PC-3 (cell line): ENCODE measurements at regions of chr3 and their contacts with region 1.

Region 1: DNA sequence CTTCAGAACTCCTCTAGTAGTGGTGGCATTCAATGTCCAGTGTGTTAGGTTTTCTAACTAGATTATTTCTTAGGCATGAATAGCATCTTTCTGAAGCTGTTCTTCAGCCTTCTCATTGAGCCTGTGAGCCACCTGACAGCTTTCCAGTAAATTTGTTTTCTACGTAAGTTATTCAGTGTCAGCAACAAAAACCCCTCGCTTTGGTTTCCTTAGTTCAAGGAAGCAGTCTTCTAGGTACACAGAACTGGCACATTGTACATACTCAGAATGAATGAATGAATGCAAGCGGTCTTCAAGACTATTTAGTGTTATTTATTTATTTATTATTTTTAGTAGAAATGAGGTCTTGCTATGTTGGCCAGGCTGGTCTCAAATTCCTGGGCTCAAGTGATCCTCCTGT is 44.9 kb downstream of the DRD3 start:
- DNase-seq: no peak
- ATAC-seq: no peak
- H3K4me3 ChIP-seq: no peak overlapping the region
- H3K27ac ChIP-seq: no peak overlapping the region
- H3K4me1 ChIP-seq: no peaks in the 10 kb centered on the region
- H3K27me3 ChIP-seq: 0 out of 2 replicates have a peak, but pooled peaks cover 5% of the 10 kb centered on the region
- CTCF ChIP-seq: no peak

Region 2: DNA sequence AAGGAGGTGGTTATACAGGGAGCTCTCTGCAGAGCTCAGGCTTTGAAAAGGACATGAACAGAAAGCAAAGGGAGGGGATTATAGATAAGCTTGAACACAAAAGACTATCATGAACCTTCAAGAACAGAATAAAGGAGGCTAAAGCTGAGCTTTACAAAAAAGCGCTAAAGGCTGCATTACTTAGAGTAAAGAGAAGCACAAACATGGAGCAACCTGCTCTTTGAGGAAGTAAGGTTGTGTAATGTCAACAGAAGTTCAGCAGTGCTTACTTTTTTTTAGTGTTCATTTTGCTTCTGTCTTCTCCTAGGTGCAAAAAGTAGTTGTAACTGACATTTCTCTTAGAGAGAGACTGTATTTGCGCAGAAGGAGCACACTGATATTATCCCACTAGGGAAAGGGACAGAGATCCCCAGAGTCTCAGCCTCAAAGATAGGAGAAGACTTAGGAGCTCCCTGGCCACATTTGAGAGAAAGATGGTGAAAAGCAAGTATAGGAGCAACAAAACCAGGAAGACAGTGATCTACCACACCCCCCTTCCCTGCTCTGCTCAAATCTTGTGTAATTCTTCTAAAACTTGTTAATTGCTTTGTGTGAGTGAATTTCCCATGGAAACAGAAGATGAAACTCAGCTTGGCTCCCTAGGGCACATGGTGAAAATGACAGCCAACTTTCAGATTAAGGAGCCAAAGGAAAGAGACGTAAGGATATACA is 22.7 kb before region 1 on chr3:
- CTCF ChIA-PET with region 1: interaction called, 10 read pairs
- POLR2A ChIA-PET with region 1: no interaction called
- intact Hi-C with region 1: no loop called
- DNase-seq: no peak
- ATAC-seq: no peak
- H3K4me3 ChIP-seq: no peak overlapping the region
- H3K27ac ChIP-seq: no peak overlapping the region
- H3K4me1 ChIP-seq: no peaks in the 10 kb centered on the region
- H3K27me3 ChIP-seq: peaks cover 14% of the 10 kb centered on the region; the same call in 1 of the 2 replicates
- CTCF ChIP-seq: no peak

Region 3: GRCh38 chr3:114194750-114195149 is 60.8 kb after region 1 on chr3:
- CTCF ChIA-PET with region 1: no interaction called
- POLR2A ChIA-PET with region 1: no interaction called
- intact Hi-C with region 1: no loop called
- DNase-seq: no peak
- ATAC-seq: no peak
- H3K4me3 ChIP-seq: no peak overlapping the region
- H3K27ac ChIP-seq: no peak overlapping the region
- H3K4me1 ChIP-seq: no peaks in the 10 kb centered on the region
- H3K27me3 ChIP-seq: peaks cover 15% of the 10 kb centered on the region
- CTCF ChIP-seq: no peak

Region 4: GRCh38 chr3:114290911-114291901 is 157.3 kb after region 1 on chr3:
- CTCF ChIA-PET with region 1: no interaction called
- POLR2A ChIA-PET with region 1: no interaction called
- intact Hi-C with region 1: no loop called
- DNase-seq: peak; percentile 59
- ATAC-seq: peak; percentile 72; the same call in 1 of the 2 replicates
- H3K4me3 ChIP-seq: no peak overlapping the region
- H3K27ac ChIP-seq: no peak overlapping the region
- H3K4me1 ChIP-seq: no peaks in the 10 kb centered on the region
- H3K27me3 ChIP-seq: peaks cover 8% of the 10 kb centered on the region; the same call in 1 of the 2 replicates
- CTCF ChIP-seq: peak; percentile 81

Region 5: GRCh38 chr3:114566162-114566755 is 432.3 kb after region 1 on chr3:
- CTCF ChIA-PET with region 1: no interaction called
- POLR2A ChIA-PET with region 1: no interaction called
- intact Hi-C with region 1: no loop called
- DNase-seq: no peak
- ATAC-seq: no peak
- H3K4me3 ChIP-seq: no peak overlapping the region
- H3K27ac ChIP-seq: no peak overlapping the region
- H3K4me1 ChIP-seq: no peaks in the 10 kb centered on the region
- H3K27me3 ChIP-seq: no peaks in the 10 kb centered on the region
- CTCF ChIP-seq: no peak